Breast epithelium (tissue), 4 donors: ENCODE measurements at regions of chr3 and their contacts with region 1.

Region 1: DNA sequence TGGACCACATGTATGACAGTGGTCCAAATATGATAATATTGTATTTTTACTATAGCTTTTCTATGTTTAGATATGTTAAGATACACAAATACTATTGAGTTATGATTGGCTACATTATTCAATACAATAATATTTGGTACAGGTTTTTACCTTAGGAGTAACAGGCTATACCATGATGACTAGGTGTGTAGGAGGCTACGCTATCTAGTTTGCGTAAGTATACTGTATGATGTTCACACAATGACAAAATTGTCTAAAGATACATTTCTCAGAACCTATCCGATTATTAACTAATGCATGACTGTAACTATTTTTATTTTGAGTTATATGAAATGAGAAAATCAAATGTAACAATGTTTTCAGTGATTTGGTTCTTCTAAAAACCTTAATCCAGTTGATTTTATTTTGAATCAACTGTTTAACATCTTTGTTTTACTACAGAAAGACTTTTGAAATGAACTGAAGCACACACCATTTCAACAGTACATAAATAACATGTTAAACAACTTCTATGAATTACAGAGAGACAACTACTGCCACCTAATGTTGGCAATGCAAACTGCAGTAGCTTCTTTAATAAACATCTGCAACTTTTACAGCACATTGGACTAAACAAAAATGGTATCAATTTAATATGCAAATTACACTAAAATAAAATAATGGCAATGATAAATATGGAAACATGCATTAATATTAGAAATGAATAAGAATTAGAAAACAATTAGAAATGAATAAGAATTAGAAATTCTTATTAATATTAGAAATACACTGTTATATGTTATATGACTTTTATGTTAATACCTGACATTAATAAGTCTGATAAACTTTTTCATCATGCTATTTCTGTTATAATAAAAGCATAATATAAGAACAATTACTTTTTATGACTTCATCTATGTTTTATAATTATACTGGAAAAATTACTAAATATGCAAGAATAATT is 255.7 kb downstream of the MBNL1 start:
- DNase-seq: no peak
- H3K4me3 ChIP-seq: no peak overlapping the region
- H3K27ac ChIP-seq: no peak overlapping the region
- H3K4me1 ChIP-seq: no peaks in the 10 kb centered on the region
- H3K27me3 ChIP-seq: no peaks in the 10 kb centered on the region
- CTCF ChIP-seq: peak; percentile 60 to 75 (median 67)
- POLR2A ChIP-seq: no peak

Region 2: GRCh38 chr3:152508705-152509104 is 15.8 kb before region 1 on chr3:
- intact Hi-C with region 1: no loop called
- DNase-seq: no peak
- H3K4me3 ChIP-seq: no peak overlapping the region
- H3K27ac ChIP-seq: no peak overlapping the region
- H3K4me1 ChIP-seq: no peaks in the 10 kb centered on the region
- H3K27me3 ChIP-seq: no peaks in the 10 kb centered on the region
- CTCF ChIP-seq: peak; percentile 15 to 37 (median 31)
- POLR2A ChIP-seq: no peak

Region 3: DNA sequence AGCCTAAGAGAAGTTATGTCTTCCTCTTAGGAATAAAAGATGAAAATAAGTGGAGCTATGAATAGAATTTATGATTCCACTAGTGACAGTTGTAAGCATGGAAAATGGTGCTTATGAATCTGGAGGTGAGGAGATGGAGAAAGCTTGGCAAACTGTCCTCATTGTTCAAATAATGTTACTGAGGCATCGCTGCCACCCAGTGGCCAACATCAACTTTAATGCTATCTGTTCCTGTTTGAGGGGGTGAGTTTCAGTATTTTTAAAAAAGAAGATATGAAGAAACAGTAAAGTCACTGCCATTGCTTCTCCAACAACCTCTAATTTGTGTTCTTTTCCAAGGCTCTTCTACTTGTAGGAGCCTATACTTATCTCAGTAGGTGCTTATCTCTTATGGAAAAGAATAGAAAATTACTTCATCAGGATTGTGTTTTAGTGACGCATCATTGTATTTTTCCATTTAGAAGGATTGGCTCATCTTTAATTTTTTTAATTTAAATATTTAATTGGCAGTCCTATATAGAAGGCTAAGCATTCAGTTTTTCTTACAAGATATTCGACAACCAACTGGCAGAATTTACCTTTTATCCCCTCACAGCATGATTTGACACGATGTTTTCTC is 50.1 kb after region 1 on chr3:
- intact Hi-C with region 1: loop called (anchors 2 kb)
- DNase-seq: no peak
- H3K4me3 ChIP-seq: no peak overlapping the region
- H3K27ac ChIP-seq: no peak overlapping the region
- H3K4me1 ChIP-seq: no peaks in the 10 kb centered on the region
- H3K27me3 ChIP-seq: no peaks in the 10 kb centered on the region
- CTCF ChIP-seq: peak in 2 of 3 donors; percentile 9 to 52
- POLR2A ChIP-seq: no peak